A549 (cell line): ENCODE measurements at regions of chr3 and their contacts with region 1.

Region 1: DNA sequence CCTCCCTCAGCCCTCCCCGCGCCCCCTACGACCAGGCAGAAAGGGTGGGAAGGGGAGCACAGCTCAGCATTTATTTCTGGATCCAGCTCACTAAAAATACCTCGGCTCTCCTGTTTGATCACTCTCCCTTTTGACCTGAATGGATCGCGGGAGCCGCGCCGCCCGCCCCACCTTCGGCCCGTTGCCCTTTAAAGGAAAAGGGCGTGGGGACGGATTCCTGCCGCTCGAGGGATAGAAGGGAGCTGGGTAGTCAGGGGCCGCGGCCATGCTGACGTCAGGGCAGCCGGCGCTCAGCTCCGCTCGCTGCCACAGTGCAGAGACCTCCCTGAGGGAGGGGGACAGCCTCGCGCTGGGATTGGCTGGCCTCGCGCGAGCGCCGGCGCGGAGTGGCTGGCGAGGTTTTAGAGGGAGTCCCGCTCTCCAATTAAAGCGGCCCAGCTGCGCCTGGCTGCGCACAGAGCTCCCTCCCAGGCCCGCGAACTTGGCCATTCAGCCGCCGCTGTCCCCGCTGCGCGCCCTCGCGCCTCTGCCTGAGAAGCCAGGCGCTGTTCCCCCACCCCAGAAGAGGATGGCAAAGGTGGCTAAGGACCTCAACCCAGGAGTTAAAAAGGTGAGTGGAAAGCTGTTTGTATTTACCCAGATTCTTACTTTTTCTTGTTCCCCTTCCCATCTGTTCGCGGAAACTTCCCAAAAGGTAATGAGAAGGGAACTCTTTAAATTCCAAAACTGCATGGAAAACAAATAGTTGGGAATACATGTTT is at the start of gene LMCD1:
- DNase-seq: peak; percentile 88 to 97
- ATAC-seq: peak; percentile 91 to 94
- H3K4me3 ChIP-seq: peak within 1 kb of the TSS; percentile 51
- H3K27ac ChIP-seq: peak within 1 kb of the TSS; percentile 86 to 88
- H3K4me1 ChIP-seq: peaks cover 68% of the 10 kb centered on the region
- CTCF ChIP-seq: no peak
- EP300 ChIP-seq: no peak
- POLR2A ChIP-seq: peak; percentile 81
- RAD21 ChIP-seq: no peak; a peak in 1 of 5 replicates
- polyA plus RNA-seq, gene LMCD1: 85.4 and 86.1 TPM in 2 replicates

Region 2: GRCh38 chr3:8458711-8459110 is 42.8 kb before region 1 on chr3:
- CTCF ChIA-PET with region 1: interaction called, 15 read pairs
- POLR2A ChIA-PET with region 1: interaction called, 29 read pairs
- DNase-seq: no peak
- ATAC-seq: no peak
- H3K4me3 ChIP-seq: no peak overlapping the region
- H3K27ac ChIP-seq: peak overlapping the region in 1 of 2 experiments; percentile 83; a peak in 3 of 6 replicates
- H3K4me1 ChIP-seq: peaks cover 29% of the 10 kb centered on the region
- CTCF ChIP-seq: no peak
- EP300 ChIP-seq: no peak
- POLR2A ChIP-seq: no peak
- RAD21 ChIP-seq: no peak

Region 3: GRCh38 chr3:8490079-8490552 is 11.4 kb before region 1 on chr3:
- CTCF ChIA-PET with region 1: interaction called, 9 read pairs
- POLR2A ChIA-PET with region 1: interaction called, 21 read pairs
- DNase-seq: peak; percentile 38 to 56
- ATAC-seq: peak in 1 of 2 experiments; percentile 56; a peak in 3 of 6 replicates
- H3K4me3 ChIP-seq: no peak overlapping the region
- H3K27ac ChIP-seq: peak overlapping the region; percentile 4 to 41; a peak in 2 of 6 replicates
- H3K4me1 ChIP-seq: peaks cover 37% of the 10 kb centered on the region
- CTCF ChIP-seq: no peak
- EP300 ChIP-seq: no peak
- POLR2A ChIP-seq: no peak
- RAD21 ChIP-seq: no peak